ENCODE measurements at regions of chr12 and their contacts with region 1.

Region 1: GRCh38 chr12:126404293-126404881 is 1339.2 kb downstream of the AACS start:
- DNase-seq: peak; percentile 16 to 80
- H3K4me3 ChIP-seq: no peak overlapping the region
- H3K27ac ChIP-seq: peak overlapping the region; percentile 95
- H3K4me1 ChIP-seq: peaks cover 28% of the 10 kb centered on the region
- H3K27me3 ChIP-seq: no peaks in the 10 kb centered on the region
- CTCF ChIP-seq: no peak

Region 2: DNA sequence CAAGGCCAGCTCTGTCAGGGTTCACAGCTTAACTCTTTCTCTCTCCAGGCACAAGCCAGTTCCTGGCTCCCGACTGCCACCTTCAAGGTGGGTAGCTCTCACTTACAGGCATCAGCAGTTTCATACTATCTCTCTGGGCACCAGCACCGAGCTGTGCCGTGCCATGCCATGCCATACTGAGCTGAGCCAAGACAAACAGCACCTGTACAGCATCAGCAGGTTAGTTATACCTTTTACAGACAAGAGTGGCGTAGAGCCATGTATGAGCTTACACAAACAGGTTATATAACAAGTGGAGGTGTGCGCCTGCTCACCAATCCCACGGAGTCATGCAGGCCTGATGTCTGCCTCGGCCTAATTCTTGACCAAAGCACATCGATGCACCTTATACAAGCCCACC is 240.4 kb before region 1 on chr12:
- CTCF ChIA-PET with region 1: no interaction called
- POLR2A ChIA-PET with region 1: no interaction called
- intact Hi-C with region 1: no loop called
- DNase-seq: no peak
- H3K4me3 ChIP-seq: no peak overlapping the region
- H3K27ac ChIP-seq: no peak overlapping the region
- H3K4me1 ChIP-seq: no peaks in the 10 kb centered on the region
- H3K27me3 ChIP-seq: no peaks in the 10 kb centered on the region
- CTCF ChIP-seq: no peak

Region 3: DNA sequence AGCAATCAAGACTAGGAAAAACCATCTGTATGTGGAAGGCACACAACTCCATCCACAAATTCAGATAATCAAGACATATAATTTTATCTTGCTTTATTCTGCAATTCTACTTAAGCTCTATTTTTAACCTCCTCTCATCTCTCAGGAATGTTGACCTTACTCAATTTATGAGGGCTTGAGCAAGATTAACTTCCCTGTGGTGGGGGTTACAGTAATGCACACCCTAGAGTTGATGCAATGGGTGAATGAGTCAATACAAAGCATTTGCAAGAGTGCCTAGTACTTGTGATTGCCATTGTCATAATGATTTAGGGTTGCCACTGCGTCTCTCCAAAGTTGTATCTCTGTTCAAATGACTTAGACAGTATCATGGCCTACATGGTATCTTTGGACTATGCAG is 264.2 kb after region 1 on chr12:
- CTCF ChIA-PET with region 1: no interaction called
- POLR2A ChIA-PET with region 1: no interaction called
- intact Hi-C with region 1: loop called (anchors 2 kb)
- DNase-seq: peak in 1 of 2 experiments; percentile 74
- H3K4me3 ChIP-seq: no peak overlapping the region
- H3K27ac ChIP-seq: peak overlapping the region; percentile 84
- H3K4me1 ChIP-seq: peaks cover 23% of the 10 kb centered on the region
- H3K27me3 ChIP-seq: no peaks in the 10 kb centered on the region
- CTCF ChIP-seq: no peak

Measured in PC-9 (cell line).